Astrocyte of the cerebellum (primary cell): ENCODE measurements at regions of chr16 and their contacts with region 1.

Region 1: DNA sequence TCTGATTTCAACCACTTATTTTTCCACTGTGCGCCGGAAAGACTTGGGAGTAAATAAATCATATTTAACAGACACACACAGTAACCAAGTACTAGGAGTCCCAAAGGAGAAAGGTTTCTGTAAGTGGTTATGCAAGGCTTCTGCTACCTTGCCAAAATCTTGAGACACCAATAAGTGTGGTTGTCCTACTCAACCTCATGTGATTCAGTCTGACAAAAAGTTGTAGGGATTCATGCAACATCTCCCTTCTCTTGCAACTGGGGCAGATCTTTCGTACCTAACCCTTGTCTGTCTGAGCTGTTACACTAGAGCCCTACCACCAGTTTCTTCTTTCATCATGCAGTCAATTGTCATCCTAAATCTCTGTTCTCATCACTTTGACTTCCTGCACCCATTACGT is 69.9 kb upstream of the NUDT7 start:
- DNase-seq: no peak
- H3K4me3 ChIP-seq: no peak overlapping the region
- CTCF ChIP-seq: no peak

Region 2: DNA sequence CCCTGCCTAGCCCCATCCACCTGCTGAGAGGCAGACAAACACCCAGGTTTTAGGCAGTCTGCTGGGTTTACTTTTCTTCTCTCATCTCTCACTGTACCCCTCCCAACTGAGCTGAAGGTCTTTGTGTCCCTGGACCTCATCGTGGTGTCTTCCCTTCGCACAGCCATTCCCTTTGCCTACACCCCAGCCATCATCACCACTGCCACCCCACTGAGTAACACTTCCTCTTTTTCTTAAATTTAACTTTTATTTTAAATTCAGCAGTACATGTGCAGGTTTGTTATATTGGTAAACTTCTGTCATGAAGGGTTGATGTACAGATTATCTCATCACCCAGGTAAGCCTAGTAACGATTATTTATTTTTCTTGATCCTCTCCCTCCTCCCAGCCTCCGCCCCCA is 649.8 kb before region 1 on chr16:
- in situ Hi-C with region 1: no loop called
- DNase-seq: no peak
- H3K4me3 ChIP-seq: no peak overlapping the region
- CTCF ChIP-seq: no peak

Region 3: DNA sequence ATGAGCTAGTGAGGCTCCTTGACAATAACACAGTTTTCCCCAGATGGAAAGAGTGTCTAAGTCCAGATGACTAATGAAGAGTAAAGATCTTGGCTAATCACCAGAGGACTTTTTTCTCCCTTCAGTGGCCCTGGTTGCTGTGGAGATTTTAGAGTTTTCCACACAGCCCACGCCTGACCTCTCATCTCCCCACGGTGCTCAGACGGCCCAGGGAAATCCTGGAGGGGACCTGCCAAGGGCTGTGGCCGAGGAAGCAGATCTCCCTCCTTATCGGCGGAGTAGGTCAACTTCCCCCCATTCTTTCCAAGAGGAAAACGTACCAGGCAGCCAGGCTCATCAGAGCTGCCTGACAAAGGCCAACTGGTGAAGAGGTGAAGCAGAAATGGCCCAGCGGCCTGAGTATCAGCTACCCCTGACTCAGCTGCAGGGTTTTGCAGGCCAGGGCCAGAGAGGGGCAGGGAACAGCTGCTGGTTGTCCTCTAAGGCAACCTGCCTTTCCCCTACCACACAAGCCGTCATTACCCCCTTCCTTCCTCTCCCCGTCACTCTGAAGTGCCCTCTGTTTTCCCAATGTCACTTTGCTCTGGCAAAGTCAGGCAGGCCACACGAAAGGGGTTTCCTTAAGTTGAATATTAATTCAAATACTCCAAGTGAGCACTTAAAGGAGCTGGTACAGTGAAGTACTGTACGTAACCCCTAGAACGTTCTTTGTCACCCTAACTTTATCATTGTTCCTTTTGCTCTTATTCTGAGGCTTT is 77.4 kb before region 1 on chr16:
- in situ Hi-C with region 1: loop called (anchors 5 kb)
- DNase-seq: no peak
- H3K4me3 ChIP-seq: no peak overlapping the region
- CTCF ChIP-seq: no peak

Region 4: DNA sequence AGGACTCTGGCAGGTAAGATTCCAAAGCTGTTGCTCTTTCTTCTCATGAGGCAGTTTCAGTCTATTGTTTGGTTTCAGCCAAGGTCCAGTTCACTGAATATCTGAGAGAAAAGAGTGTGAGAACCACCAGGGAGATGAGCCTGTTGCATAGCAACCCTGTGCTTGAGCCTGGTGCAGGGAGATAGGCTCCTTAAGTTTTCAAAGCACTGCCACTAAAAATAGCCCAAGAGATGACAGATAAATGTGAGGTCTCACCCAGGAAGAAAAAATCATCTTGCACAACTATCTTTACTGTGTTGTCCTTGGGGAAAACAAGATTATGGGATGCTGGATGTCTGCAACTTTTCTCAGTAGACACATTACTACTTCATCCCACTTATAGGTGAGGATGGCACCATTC is 43.8 kb after region 1 on chr16:
- in situ Hi-C with region 1: no loop called
- DNase-seq: no peak
- H3K4me3 ChIP-seq: no peak overlapping the region
- CTCF ChIP-seq: no peak

Region 5: DNA sequence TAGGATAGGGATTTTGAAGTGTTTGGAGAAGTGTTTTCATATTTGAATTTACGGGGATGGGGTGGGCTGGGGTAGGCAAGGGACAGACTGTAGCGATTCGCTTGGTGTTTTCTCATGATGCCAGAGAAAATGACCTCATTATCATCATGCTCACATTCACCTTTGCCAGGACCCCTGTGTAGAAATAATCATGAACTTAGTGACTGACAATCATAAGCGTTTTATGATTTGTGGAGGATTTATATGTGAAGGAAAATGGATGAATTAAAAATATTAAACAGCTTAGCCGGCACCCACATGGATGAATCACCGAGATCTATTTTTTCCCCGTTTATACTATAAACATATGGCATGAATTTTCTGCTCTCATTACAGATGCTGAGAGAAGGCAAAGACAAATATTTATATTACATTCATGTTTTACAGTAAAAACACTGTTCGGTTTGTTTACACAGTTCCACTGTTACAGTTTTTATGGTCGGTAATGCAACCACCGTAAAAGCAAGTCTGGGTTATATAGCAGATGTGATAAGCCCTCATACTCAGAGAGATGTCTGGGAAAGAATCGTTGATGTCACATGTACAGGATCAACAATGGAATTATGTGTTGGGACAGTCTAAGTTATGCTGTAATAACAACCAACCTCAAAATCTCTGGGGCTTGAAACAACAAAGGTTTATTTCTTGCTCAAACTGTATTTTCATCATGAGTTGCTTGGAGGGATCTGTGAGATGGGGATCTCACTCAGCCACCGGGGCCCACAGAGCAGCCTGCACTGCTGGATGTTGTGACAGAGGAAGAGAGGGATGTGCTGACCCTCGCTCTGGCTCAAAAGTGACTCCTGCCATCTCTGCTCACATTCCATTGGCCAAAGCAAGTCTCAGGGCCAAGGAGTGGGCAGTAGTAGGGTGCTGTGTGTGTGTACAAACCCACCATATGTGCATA is 532.1 kb after region 1 on chr16:
- in situ Hi-C with region 1: no loop called
- DNase-seq: peak; percentile 29
- H3K4me3 ChIP-seq: no peak overlapping the region
- CTCF ChIP-seq: no peak